ENCODE measurements at regions of chr4 and their contacts with region 1.

Region 1: GRCh38 chr4:47926639-47927258 is 12.4 kb upstream of the NFXL1 start:
- DNase-seq: peak; percentile 21 to 70 (median 51)
- ATAC-seq: peak; percentile 97
- H3K4me3 ChIP-seq: no peak overlapping the region
- H3K4me3 Mint-ChIP-seq: peak overlapping the region; percentile 44
- H3K27ac ChIP-seq: no peak overlapping the region
- H3K27ac Mint-ChIP-seq: no peak overlapping the region
- H3K4me1 ChIP-seq: peaks cover 6% of the 10 kb centered on the region
- H3K4me1 Mint-ChIP-seq: peaks cover 8% of the 10 kb centered on the region
- H3K27me3 ChIP-seq: no peaks in the 10 kb centered on the region
- H3K27me3 Mint-ChIP-seq: peaks cover 24% of the 10 kb centered on the region
- CTCF ChIP-seq: peak; percentile 61

Region 2: GRCh38 chr4:47954245-47954644 is 27.5 kb after region 1 on chr4:
- CTCF ChIA-PET with region 1: no interaction called
- POLR2A ChIA-PET with region 1: no interaction called
- intact Hi-C with region 1: loop called in 1 of 2 experiments (anchors 1 kb)
- DNase-seq: no peak
- ATAC-seq: no peak
- H3K4me3 ChIP-seq: no peak overlapping the region
- H3K4me3 Mint-ChIP-seq: no peak overlapping the region
- H3K27ac ChIP-seq: no peak overlapping the region
- H3K27ac Mint-ChIP-seq: no peak overlapping the region
- H3K4me1 ChIP-seq: no peaks in the 10 kb centered on the region
- H3K4me1 Mint-ChIP-seq: no peaks in the 10 kb centered on the region
- H3K27me3 ChIP-seq: no peaks in the 10 kb centered on the region
- H3K27me3 Mint-ChIP-seq: peaks cover 5% of the 10 kb centered on the region
- CTCF ChIP-seq: no peak

Measured in CD8-positive, alpha-beta T cell (primary cell).